ENCODE measurements at regions of chr2 and their contacts with region 1.

Region 1: GRCh38 chr2:20450204-20450999 is 3.5 kb downstream of the RHOB start:
- DNase-seq: no peak
- H3K4me3 ChIP-seq: peak overlapping the region; percentile 73 to 99 (median 78)
- H3K27ac ChIP-seq: peak overlapping the region; percentile 94 to 100 (median 98)
- H3K4me1 ChIP-seq: peaks cover 24 to 56% (median 48%) of the 10 kb centered on the region in 4 donors
- H3K27me3 ChIP-seq: no peaks in the 10 kb centered on the region
- CTCF ChIP-seq: no peak
- EP300 ChIP-seq: no peak
- POLR2A ChIP-seq: peak; percentile 17

Region 2: DNA sequence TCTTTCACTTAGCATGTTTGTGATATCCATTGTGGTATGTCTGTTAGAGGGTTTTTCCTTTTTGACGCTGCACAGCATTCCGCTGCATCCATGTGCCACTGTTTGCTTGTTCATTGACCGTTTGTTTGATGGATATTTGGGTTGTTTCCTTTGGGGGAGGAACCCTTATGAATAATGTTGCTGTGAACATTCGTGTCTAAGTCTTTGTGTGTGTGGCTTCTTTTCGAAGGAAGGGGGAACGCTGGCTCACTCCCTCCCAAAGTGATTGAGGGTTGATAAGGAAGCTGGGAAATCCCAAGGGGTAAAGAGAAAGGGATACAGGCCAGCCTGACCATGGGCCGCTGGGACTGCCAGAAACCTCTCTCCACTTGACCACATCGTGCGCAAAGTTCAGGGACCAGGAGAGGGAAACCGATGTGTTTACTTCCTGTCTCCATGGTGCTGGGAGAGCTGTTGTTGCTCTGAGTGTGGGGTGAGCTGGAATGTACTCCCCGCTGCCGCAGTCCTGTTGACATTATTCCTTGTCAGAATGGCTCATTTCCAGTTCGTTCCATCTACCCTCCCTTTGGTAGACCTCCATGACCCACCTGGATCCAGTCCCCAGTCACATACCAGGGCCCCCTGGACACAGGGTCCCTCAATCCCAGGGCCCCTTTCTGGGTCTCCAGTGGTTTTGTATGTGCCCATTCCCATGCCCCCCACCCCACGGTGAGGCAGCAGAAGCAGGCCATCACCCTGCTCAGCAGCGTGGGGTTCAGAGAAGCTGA is 160.9 kb after region 1 on chr2:
- intact Hi-C with region 1: loop called (anchors 2 kb)
- DNase-seq: no peak
- H3K4me3 ChIP-seq: no peak overlapping the region
- H3K27ac ChIP-seq: peak overlapping the region; percentile 96 to 99 (median 96)
- H3K4me1 ChIP-seq: peaks cover 76 to 84% (median 80%) of the 10 kb centered on the region in 4 donors
- H3K27me3 ChIP-seq: no peaks in the 10 kb centered on the region
- CTCF ChIP-seq: no peak
- EP300 ChIP-seq: no peak
- POLR2A ChIP-seq: no peak